ENCODE measurements at regions of chr16 and their contacts with region 1.

Region 1: GRCh38 chr16:14285513-14286385 is 214.6 kb downstream of the MRTFB start:
- DNase-seq: peak; percentile 90 to 97 (median 92)
- ATAC-seq: peak; percentile 92
- H3K4me3 ChIP-seq: peak overlapping the region; percentile 98
- H3K27ac ChIP-seq: peak overlapping the region; percentile 72
- H3K4me1 ChIP-seq: peaks cover 3 to 15% of the 10 kb centered on the region in 2 experiments; a peak in 4 of 5 replicates
- H3K27me3 ChIP-seq: no peaks in the 10 kb centered on the region
- CTCF ChIP-seq: no peak
- EP300 ChIP-seq: peak; percentile 59; the same call in 1 of the 2 replicates
- POLR2A ChIP-seq: no peak
- RAD21 ChIP-seq: 0 out of 4 replicates have a peak, but pooled peaks of 1 of the 2 experiments have one; percentile 10

Region 2: GRCh38 chr16:14249291-14250032 is 36.3 kb before region 1 on chr16:
- CTCF ChIA-PET with region 1: interaction called, 4 read pairs
- POLR2A ChIA-PET with region 1: no interaction called
- in situ Hi-C with region 1: no loop called
- intact Hi-C with region 1: loop called (anchors 1 kb)
- DNase-seq: peak; percentile 34 to 58 (median 40)
- ATAC-seq: no peak
- H3K4me3 ChIP-seq: no peak overlapping the region
- H3K27ac ChIP-seq: no peak overlapping the region
- H3K4me1 ChIP-seq: no peaks in the 10 kb centered on the region
- H3K27me3 ChIP-seq: no peaks in the 10 kb centered on the region
- CTCF ChIP-seq: peak; percentile 64 to 85 (median 83)
- EP300 ChIP-seq: no peak
- POLR2A ChIP-seq: no peak
- RAD21 ChIP-seq: peak; percentile 61 to 72